AG04449 (cell line): ENCODE measurements at regions of chr1 and their contacts with region 1.

Region 1: DNA sequence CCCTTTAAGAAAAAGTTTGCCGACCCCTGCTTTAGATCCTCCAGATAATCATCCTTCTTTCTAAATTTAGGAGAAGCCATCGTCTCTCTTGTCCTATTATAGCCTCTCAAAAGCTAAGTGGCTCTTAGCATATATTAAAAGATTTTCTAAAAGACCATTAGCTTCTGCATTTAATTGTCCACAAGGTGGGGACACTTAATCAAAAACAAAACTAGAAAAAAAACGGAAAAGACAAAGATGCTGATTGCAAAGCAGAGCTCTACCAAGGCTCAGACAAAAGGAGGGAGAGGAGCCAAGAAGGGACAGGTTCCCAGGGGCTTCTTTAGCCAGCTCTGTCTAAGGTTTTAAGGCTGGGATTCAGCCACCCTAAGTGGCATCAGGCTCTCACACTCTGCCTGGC is 128.3 kb upstream of the HMGB4 start:
- DNase-seq: no peak
- H3K4me3 ChIP-seq: no peak overlapping the region
- CTCF ChIP-seq: peak; percentile 3

Region 2: DNA sequence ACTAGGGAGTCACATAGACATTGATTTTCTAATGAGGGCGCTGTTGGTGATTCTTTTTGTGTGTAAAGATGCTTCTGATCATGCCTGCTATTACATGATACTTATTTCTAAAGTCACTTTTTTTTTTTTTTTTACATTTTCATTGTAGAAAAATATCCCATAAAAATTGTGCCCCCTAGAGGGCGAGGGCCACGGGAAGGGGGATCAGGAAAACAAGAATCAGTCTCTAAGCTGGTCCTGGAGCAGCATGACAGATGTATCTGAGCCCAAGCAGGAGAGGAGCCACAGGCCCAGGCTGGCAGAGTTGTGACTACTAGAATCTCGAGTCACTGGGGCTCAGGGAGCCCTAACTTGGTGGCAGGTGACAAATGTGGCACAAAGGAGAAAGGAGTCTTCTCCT is 235.1 kb before region 1 on chr1:
- CTCF ChIA-PET with region 1: no interaction called
- POLR2A ChIA-PET with region 1: no interaction called
- DNase-seq: no peak
- H3K4me3 ChIP-seq: no peak overlapping the region
- CTCF ChIP-seq: no peak

Region 3: DNA sequence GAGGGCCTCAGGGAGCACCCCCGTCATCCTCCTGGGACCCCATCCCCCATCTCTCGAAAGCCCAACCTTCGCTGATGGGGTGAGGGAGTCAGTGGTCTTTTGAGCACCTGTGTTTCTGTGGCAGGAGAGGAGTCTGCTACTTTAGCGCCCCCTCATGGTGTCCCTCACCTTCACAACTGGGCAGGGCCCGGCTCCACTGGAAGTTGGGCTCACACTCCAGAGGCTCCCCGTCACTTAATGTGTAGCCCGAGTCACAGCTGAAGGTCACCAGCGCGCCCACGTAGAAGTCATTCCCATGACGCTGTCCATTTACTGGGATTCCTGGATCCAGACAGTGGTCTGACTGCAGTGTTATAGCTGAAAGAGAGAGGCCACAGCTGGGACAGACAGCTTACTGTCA is 11.3 kb before region 1 on chr1:
- CTCF ChIA-PET with region 1: interaction called, 14 read pairs
- POLR2A ChIA-PET with region 1: no interaction called
- DNase-seq: no peak
- H3K4me3 ChIP-seq: no peak overlapping the region
- CTCF ChIP-seq: no peak

Region 4: DNA sequence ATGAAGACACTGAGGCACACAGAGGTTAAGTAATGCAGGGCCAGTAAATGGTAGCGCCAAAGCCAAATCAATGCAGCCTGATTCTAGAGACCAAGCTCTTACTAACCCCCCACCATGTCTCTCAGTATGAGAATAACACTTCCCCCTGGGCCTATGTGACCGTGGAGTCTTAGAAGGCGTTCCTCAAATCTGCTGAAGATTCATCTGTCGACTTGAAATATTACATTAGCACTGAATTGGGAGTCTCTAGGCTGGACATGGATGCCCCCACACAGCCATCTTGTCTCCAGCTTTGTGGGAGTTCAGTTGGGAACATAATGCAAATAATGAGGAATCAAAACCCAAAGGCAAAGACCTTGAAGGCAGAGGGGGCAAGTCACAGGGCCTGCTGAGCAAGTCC is 10.3 kb after region 1 on chr1:
- CTCF ChIA-PET with region 1: interaction called, 12 read pairs
- POLR2A ChIA-PET with region 1: no interaction called
- DNase-seq: no peak
- H3K4me3 ChIP-seq: no peak overlapping the region
- CTCF ChIP-seq: no peak